ENCODE measurements at regions of chr13 and their contacts with region 1.

Region 1: DNA sequence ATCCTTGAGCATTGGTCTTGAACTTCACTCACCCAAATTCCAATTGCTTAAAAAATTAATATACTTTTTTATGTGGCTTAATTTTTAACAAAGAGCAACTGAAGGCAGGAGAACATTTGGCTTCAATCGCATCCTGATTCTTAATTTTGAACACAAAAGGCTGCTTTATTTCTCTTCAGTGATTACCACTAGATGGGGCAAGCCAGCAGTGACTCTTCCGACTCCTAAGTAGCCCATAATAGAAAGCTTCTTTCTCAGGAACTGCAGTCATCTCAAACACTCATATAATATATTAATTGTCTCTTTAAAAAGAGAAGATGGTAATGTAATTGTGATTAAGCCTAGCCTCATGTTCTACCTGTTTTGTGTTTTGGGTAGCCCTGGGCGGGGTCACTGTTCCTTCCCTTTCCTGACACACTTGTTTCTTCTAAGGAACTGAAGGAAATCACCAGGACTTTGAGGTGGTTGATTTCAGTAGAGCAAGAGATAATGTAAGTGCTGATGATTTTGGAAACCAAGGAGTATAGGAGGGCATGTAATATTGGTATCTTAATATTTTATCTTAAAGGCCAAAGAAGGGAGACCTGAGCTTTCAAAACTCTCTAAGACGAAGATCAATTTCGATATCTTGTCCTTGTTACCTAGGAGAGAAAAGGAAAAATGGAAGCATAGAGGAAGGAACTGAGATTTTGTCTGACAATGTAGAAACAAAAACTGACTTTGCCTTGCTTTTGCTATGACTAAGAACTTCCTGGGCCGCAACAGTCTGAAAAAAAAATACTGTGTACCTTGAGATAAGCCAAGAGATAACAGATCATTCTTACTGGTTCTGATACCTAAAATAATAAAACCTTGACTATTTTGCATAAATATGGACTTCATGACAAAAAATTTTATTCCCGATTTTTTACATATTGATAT is 73.1 kb downstream of the TNFSF13B start:
- DNase-seq: no peak
- ATAC-seq: peak; percentile 67
- H3K4me3 Mint-ChIP-seq: no peak overlapping the region
- H3K27ac Mint-ChIP-seq: no peak overlapping the region
- H3K4me1 Mint-ChIP-seq: peaks cover 12% of the 10 kb centered on the region
- H3K27me3 Mint-ChIP-seq: no peaks in the 10 kb centered on the region; the same call in 1 of the 2 replicates
- CTCF ChIP-seq: peak; percentile 30; the same call in 1 of the 2 replicates

Region 2: GRCh38 chr13:108508263-108508662 is 165.6 kb after region 1 on chr13:
- CTCF ChIA-PET with region 1: interaction called, 16 read pairs
- POLR2A ChIA-PET with region 1: no interaction called
- DNase-seq: no peak
- ATAC-seq: peak; percentile 86
- H3K4me3 Mint-ChIP-seq: no peak overlapping the region
- H3K27ac Mint-ChIP-seq: no peak overlapping the region; the same call in 1 of the 2 replicates
- H3K4me1 Mint-ChIP-seq: peaks cover 10% of the 10 kb centered on the region
- H3K27me3 Mint-ChIP-seq: no peaks in the 10 kb centered on the region
- CTCF ChIP-seq: peak; percentile 34; the same call in 1 of the 2 replicates

Region 3: GRCh38 chr13:108572782-108573211 is 230.2 kb after region 1 on chr13:
- CTCF ChIA-PET with region 1: no interaction called
- POLR2A ChIA-PET with region 1: no interaction called
- DNase-seq: no peak
- ATAC-seq: no peak
- H3K4me3 Mint-ChIP-seq: no peak overlapping the region
- H3K27ac Mint-ChIP-seq: no peak overlapping the region
- H3K4me1 Mint-ChIP-seq: no peaks in the 10 kb centered on the region
- H3K27me3 Mint-ChIP-seq: no peaks in the 10 kb centered on the region; the same call in 1 of the 2 replicates
- CTCF ChIP-seq: no peak

Measured in WTC11 (cell line).